ENCODE measurements at regions of chr1 and their contacts with region 1.

Region 1: GRCh38 chr1:156129706-156130581 is 15.4 kb downstream of the LMNA start:
- DNase-seq: no peak
- ATAC-seq: peak; percentile 29
- H3K4me3 ChIP-seq: no peak overlapping the region
- H3K27ac ChIP-seq: peak overlapping the region; percentile 56
- H3K4me1 ChIP-seq: peaks cover 47% of the 10 kb centered on the region
- H3K27me3 ChIP-seq: no peaks in the 10 kb centered on the region
- CTCF ChIP-seq: peak; percentile 90 to 97 (median 96)
- EP300 ChIP-seq: no peak
- POLR2A ChIP-seq: no peak
- RAD21 ChIP-seq: peak; percentile 96

Region 2: DNA sequence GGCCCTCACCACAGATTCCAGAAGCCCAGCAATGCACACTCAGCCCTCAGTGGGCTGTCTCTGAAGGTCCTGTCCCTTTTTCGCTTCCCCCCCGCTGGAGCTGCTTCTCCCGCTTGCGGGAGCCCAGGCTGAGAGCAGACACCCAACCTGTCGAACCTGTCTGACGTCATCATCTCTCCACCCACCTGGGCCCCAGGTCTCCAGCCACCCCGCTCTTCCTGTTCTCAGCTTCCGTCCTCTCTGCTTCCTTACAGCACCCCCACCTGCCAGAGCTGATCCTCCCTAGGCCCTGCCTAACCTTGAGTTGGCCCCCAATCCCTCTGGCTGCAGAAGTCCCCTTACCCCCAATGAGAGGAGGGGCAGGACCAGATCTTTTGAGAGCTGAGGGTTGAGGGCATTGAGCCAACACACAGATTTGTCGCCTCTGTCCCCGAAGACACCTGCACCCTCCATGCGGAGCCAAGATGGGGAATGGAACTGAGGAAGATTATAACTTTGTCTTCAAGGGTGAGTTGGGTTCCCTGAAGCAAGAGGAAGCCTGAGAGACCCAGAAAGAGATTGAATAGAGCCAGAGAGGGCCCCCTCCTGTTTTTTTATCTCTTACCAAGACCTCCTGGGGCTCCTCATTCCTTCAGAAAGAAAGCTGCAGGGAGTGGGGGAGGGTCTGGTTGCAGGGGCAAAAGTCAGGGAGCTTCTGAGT is 68.9 kb before region 1 on chr1 and contains the start of gene RAB25:
- CTCF ChIA-PET with region 1: interaction called, 15 read pairs
- POLR2A ChIA-PET with region 1: interaction called, 4 read pairs
- RAD21 ChIA-PET with region 1: interaction called, 4 read pairs
- SMC1A ChIA-PET with region 1: interaction called, 4 read pairs
- in situ Hi-C with region 1: no loop called
- intact Hi-C with region 1: no loop called
- DNase-seq: no peak
- ATAC-seq: no peak
- H3K4me3 ChIP-seq: no peak within 1 kb of the TSS
- H3K27ac ChIP-seq: no peak within 1 kb of the TSS
- H3K4me1 ChIP-seq: no peaks in the 10 kb centered on the region
- H3K27me3 ChIP-seq: no peaks in the 10 kb centered on the region
- CTCF ChIP-seq: no peak
- EP300 ChIP-seq: no peak
- POLR2A ChIP-seq: no peak
- RAD21 ChIP-seq: no peak
- polyA plus RNA-seq, gene RAB25: not detected

Region 3: GRCh38 chr1:156096640-156097391 is 33.1 kb before region 1 on chr1:
- CTCF ChIA-PET with region 1: interaction called, 1,294 read pairs
- POLR2A ChIA-PET with region 1: interaction called, 89 read pairs
- RAD21 ChIA-PET with region 1: interaction called, 695 read pairs
- SMC1A ChIA-PET with region 1: interaction called, 874 read pairs
- in situ Hi-C with region 1: loop called (anchors 5 kb)
- intact Hi-C with region 1: loop called (anchors 1 kb)
- DNase-seq: peak; percentile 93
- ATAC-seq: peak; percentile 87
- H3K4me3 ChIP-seq: no peak overlapping the region
- H3K27ac ChIP-seq: peak overlapping the region; percentile 79
- H3K4me1 ChIP-seq: peaks cover 38% of the 10 kb centered on the region
- H3K27me3 ChIP-seq: no peaks in the 10 kb centered on the region
- CTCF ChIP-seq: peak; percentile 97 to 99 (median 97)
- EP300 ChIP-seq: peak; percentile 94 to 97
- POLR2A ChIP-seq: no peak
- RAD21 ChIP-seq: peak; percentile 84

Region 4: DNA sequence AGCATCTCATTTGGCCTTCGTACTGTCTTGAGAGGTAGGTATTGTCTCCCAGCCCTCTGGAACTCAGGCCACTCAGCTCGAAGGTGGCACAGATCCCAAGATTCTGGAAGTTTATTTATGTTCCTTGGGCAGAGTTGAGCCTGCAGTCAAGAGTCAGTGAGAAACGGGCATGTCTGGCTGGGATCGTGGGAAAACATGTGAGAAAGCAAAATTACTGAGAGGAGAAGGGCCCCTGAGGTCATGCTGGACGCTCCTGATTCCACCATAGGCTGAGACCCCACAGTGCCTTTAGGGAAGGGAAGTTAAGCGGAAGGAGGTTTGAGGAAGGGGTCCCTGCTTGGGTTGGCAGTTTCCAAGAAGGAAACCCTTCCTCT is 10.9 kb after region 1 on chr1:
- CTCF ChIA-PET with region 1: interaction called, 80 read pairs
- POLR2A ChIA-PET with region 1: interaction called, 10 read pairs
- RAD21 ChIA-PET with region 1: interaction called, 17 read pairs
- SMC1A ChIA-PET with region 1: interaction called, 17 read pairs
- in situ Hi-C with region 1: no loop called
- intact Hi-C with region 1: no loop called
- DNase-seq: no peak
- ATAC-seq: peak; percentile 6; the same call in 2 of the 3 replicates
- H3K4me3 ChIP-seq: no peak overlapping the region
- H3K27ac ChIP-seq: no peak overlapping the region
- H3K4me1 ChIP-seq: peaks cover 2% of the 10 kb centered on the region; the same call in 1 of the 2 replicates
- H3K27me3 ChIP-seq: no peaks in the 10 kb centered on the region
- CTCF ChIP-seq: no peak
- EP300 ChIP-seq: no peak
- POLR2A ChIP-seq: no peak
- RAD21 ChIP-seq: no peak

Region 5: GRCh38 chr1:156241311-156241811 is 111.4 kb after region 1 on chr1:
- CTCF ChIA-PET with region 1: interaction called, 4 read pairs
- POLR2A ChIA-PET with region 1: interaction called, 11 read pairs
- RAD21 ChIA-PET with region 1: no interaction called
- SMC1A ChIA-PET with region 1: interaction called, 3 read pairs
- in situ Hi-C with region 1: no loop called
- intact Hi-C with region 1: no loop called
- DNase-seq: no peak
- ATAC-seq: peak; percentile 6; the same call in 2 of the 3 replicates
- H3K4me3 ChIP-seq: no peak overlapping the region
- H3K27ac ChIP-seq: no peak overlapping the region
- H3K4me1 ChIP-seq: peaks cover 25% of the 10 kb centered on the region
- H3K27me3 ChIP-seq: no peaks in the 10 kb centered on the region
- CTCF ChIP-seq: no peak
- EP300 ChIP-seq: no peak
- POLR2A ChIP-seq: peak; percentile 73
- RAD21 ChIP-seq: no peak